Left ventricle myocardium inferior (tissue), 1 donor: ENCODE measurements at regions of chr2 and their contacts with region 1.

Region 1: GRCh38 chr2:69643602-69644505 is at the start of gene AAK1:
- DNase-seq: peak; percentile 93
- H3K4me3 ChIP-seq: peak within 1 kb of the TSS; percentile 95
- H3K27ac ChIP-seq: peak within 1 kb of the TSS; percentile 98
- H3K4me1 ChIP-seq: peaks cover 66% of the 10 kb centered on the region
- H3K27me3 ChIP-seq: no peaks in the 10 kb centered on the region
- CTCF ChIP-seq: peak; percentile 15
- total RNA-seq, gene AAK1: 133 TPM

Region 2: GRCh38 chr2:69565431-69565839 is 78.4 kb before region 1 on chr2:
- intact Hi-C with region 1: loop called (anchors 10 kb)
- DNase-seq: peak; percentile 51
- H3K4me3 ChIP-seq: no peak overlapping the region
- H3K27ac ChIP-seq: peak overlapping the region; percentile 70
- H3K4me1 ChIP-seq: peaks cover 96% of the 10 kb centered on the region
- H3K27me3 ChIP-seq: no peaks in the 10 kb centered on the region
- CTCF ChIP-seq: peak; percentile 79

Region 3: DNA sequence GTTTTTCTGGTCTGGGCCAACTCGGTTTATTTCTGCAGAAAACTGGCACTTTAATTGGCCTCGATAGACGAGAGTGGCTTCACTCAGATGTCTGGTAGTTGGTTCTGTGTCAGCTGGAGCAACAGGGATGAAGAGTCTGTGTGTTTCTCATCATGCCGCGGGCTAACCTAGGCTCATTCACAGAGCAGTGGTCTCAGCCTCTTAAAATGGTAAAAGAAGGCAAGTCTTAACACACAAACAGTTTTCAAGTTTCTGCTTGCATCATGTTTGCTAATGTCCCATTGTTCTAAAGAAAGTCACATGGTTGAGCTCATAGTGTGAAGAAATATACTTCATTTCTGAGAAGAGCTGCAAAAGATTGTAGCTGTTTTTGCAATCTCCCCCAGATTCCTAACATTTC is 60.6 kb after region 1 on chr2:
- intact Hi-C with region 1: loop called (anchors 10 kb)
- DNase-seq: no peak
- H3K4me3 ChIP-seq: no peak overlapping the region
- H3K27ac ChIP-seq: no peak overlapping the region
- H3K4me1 ChIP-seq: no peaks in the 10 kb centered on the region
- H3K27me3 ChIP-seq: no peaks in the 10 kb centered on the region
- CTCF ChIP-seq: no peak